Mammary epithelial cell (primary cell): ENCODE measurements at regions of chr6 and their contacts with region 1.

Region 1: DNA sequence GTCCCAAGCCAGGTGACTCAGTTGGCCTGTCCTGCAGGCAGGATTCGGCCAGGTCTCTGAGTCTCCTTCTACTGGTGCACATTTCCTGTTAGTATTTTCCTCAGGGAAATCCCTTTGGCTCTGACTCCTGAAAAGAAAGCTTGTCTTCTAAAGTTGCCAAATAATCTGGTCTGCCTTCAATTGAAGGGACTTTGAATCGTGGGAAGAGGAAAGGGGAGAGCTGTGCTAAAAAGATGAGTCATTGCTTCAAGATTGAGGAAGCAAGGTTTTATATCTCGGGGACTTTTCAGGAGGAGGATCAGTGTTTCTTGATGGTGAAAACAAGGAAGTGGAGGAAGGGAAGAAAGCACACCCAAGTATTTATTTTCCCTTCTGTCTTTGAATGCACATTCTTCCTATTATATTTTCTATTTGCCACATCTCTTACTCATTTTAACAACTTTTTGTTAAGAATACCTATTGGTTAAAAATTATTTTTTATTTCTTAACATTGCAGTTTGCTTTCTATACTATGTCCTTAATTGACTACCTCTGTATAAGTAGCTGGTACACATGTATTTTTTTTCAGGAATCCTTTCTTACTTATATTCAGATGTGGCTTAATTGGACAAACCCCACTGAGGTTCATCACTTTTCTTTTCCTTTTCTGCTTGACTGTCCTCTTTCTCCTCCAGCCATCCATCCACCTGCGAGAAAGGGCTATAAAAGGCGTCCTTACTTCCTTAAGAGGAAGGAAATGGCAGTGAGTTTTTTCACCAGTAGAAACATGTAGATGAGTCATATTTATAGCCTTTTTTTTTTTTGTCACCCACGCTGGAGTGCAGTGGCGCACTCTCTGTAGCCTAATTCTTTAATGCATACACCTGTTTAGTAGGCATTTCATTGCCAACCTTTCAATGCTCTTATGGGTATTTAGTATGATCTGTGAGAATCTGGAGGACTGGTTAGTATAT is 15.0 kb upstream of the IFNGR1 start:
- DNase-seq: peak; percentile 85
- H3K4me3 ChIP-seq: no peak overlapping the region
- H3K27ac ChIP-seq: peak overlapping the region; percentile 24
- H3K4me1 ChIP-seq: peaks cover 41% of the 10 kb centered on the region
- H3K27me3 ChIP-seq: no peaks in the 10 kb centered on the region
- CTCF ChIP-seq: no peak

Region 2: GRCh38 chr6:137264311-137265075 is 30.3 kb after region 1 on chr6:
- CTCF ChIA-PET with region 1: no interaction called
- dilution Hi-C with region 1: loop called (anchors 5 kb)
- in situ Hi-C with region 1: no loop called
- intact Hi-C with region 1: no loop called
- DNase-seq: no peak
- H3K4me3 ChIP-seq: no peak overlapping the region
- H3K27ac ChIP-seq: no peak overlapping the region
- H3K4me1 ChIP-seq: peaks cover 10% of the 10 kb centered on the region
- H3K27me3 ChIP-seq: peaks cover 4% of the 10 kb centered on the region
- CTCF ChIP-seq: no peak

Region 3: DNA sequence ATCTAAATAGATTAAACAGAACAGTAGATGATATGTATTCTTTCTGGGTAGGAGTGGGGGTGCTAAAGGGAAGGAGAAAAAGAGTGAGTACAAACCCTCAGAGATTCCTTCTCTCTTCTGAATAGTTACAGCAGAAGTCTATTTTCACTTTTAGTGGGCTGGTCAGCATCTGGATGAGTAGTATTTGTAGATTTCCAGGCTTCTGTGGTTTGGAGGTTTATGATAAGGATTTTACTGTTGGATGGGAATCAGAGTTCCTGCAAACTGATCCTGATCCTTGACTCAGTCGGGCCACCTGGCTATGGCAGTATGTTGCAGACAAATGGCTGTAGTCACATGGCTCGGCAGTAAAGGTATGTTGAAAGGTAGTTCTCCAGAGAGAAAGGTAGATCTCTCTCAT is 69.3 kb after region 1 on chr6:
- CTCF ChIA-PET with region 1: no interaction called
- dilution Hi-C with region 1: loop called (anchors 5 kb)
- in situ Hi-C with region 1: no loop called
- intact Hi-C with region 1: no loop called
- DNase-seq: no peak
- H3K4me3 ChIP-seq: no peak overlapping the region
- H3K27ac ChIP-seq: no peak overlapping the region
- H3K4me1 ChIP-seq: no peaks in the 10 kb centered on the region
- H3K27me3 ChIP-seq: no peaks in the 10 kb centered on the region
- CTCF ChIP-seq: no peak